Activated B cell treated with CpG ODN at 0.5 μM for 24 hours (primary cell): ENCODE measurements at regions of chr9 and their contacts with region 1.

Region 1: DNA sequence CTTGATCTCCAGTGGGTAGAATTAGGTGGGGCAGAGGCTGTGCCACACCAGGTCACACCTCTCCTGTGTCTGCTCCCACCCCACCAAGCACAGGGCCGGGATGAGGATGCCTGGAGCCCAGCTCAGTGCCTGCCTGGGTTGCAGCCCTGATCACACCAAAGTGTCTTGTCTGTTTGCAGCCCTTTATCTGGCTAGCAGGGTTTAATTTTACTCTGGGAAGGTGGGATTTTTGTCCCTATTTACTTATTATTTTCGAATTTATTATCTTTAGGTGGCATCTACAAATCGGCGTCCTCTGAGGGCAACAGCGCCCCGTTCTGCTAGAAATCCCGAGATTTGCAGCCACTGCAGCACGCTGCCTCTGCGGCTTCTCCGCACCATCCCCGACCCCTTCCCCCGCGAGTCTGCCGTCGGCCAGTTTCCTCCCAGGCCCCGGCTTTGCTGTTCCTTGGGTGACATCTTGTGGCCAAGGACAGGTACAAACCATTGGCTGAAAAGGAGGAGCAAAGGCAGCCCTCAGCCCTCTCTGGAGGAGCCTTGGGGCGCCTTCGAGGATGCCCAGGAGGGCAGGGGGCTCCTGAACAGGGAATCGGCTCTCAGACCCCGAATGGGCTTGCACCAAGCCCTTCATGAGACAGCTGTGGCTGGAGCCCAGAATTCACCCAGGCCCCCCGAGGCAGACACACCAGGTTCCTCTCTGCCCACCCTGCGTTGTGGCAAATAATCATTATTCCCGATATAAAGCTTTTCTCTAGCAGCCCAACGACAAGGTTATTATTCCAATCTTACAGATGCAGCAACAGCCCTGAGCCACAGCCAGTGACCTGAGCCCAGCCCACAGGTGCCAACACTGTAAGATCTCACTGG is 113.0 kb downstream of the GAPVD1 start:
- DNase-seq: peak; percentile 43
- ATAC-seq: peak; percentile 95
- H3K4me3 Mint-ChIP-seq: peak overlapping the region; percentile 32
- H3K27ac Mint-ChIP-seq: no peak overlapping the region
- H3K4me1 Mint-ChIP-seq: peaks cover 4% of the 10 kb centered on the region
- H3K27me3 Mint-ChIP-seq: peaks cover 4% of the 10 kb centered on the region
- CTCF ChIP-seq: no peak

Region 2: DNA sequence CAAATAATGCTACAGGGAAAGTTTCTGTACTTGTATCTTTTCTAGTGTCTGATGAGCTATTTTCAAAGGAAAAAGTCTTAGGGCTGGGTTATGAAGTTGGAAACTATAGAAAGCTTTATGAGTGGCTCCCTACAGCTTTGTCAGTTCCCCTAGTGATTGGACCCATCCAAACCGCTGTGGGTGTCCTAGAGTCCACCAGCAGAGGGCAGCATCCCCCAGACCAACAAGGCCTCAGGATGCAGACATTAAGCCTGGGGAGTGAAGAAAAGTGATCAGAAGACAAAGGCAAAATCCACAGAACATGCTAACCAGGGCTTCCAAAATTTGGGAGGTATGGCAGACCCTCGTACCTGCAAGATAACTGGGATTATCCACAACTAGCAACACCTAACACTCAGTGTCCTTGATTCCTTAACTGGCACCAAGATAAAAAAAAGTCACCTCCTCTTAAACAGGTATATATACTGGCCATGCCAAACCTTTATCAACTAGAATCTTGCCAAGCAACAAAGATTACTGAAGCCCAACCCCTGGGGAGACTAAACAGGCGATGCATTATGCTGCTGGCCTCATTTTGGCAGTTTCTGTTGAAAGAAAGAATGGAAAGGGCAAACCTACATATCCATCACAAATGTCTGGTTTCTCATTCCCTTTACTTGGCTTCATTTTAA is 757.1 kb before region 1 on chr9:
- CTCF ChIA-PET with region 1: interaction called, 3 read pairs
- POLR2A ChIA-PET with region 1: no interaction called
- intact Hi-C with region 1: loop called (anchors 1 kb)
- DNase-seq: peak; percentile 47
- ATAC-seq: peak; percentile 75
- H3K4me3 Mint-ChIP-seq: no peak overlapping the region
- H3K27ac Mint-ChIP-seq: no peak overlapping the region
- H3K4me1 Mint-ChIP-seq: peaks cover 2% of the 10 kb centered on the region
- H3K27me3 Mint-ChIP-seq: no peaks in the 10 kb centered on the region
- CTCF ChIP-seq: peak; percentile 41

Region 3: DNA sequence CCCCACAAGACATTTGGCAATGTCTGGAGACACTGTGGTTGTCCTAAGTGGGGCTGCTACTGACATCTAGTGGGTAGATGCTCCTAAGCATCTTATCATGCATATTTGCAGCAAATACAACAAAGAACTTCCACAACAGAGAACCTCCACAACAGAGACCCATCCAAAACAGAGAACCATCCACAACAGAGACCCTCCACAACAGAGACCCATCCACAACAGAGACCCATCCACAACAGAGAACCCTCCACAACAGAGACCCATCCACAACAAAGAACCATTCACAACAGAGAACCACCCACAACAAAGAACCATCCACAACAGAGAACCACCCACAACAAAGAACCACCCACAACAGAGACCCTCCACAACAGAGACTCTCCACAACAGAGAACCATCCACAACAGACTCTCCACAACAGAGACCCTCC is 479.9 kb before region 1 on chr9:
- CTCF ChIA-PET with region 1: no interaction called
- POLR2A ChIA-PET with region 1: no interaction called
- intact Hi-C with region 1: loop called (anchors 10 kb)
- DNase-seq: no peak
- ATAC-seq: peak; percentile 85
- H3K4me3 Mint-ChIP-seq: no peak overlapping the region
- H3K27ac Mint-ChIP-seq: peak overlapping the region; percentile 50
- H3K4me1 Mint-ChIP-seq: no peaks in the 10 kb centered on the region
- H3K27me3 Mint-ChIP-seq: no peaks in the 10 kb centered on the region
- CTCF ChIP-seq: no peak

Region 4: GRCh38 chr9:125255781-125256391 is 118.8 kb before region 1 on chr9:
- CTCF ChIA-PET with region 1: no interaction called
- POLR2A ChIA-PET with region 1: no interaction called
- intact Hi-C with region 1: loop called (anchors 1 kb)
- DNase-seq: no peak
- ATAC-seq: no peak
- H3K4me3 Mint-ChIP-seq: no peak overlapping the region
- H3K27ac Mint-ChIP-seq: no peak overlapping the region
- H3K4me1 Mint-ChIP-seq: peaks cover 9% of the 10 kb centered on the region
- H3K27me3 Mint-ChIP-seq: peaks cover 2% of the 10 kb centered on the region
- CTCF ChIP-seq: no peak

Region 5: GRCh38 chr9:125694478-125694877 is 319.8 kb after region 1 on chr9:
- CTCF ChIA-PET with region 1: no interaction called
- POLR2A ChIA-PET with region 1: no interaction called
- intact Hi-C with region 1: no loop called
- DNase-seq: no peak
- ATAC-seq: no peak
- H3K4me3 Mint-ChIP-seq: no peak overlapping the region
- H3K27ac Mint-ChIP-seq: no peak overlapping the region
- H3K4me1 Mint-ChIP-seq: peaks cover 49% of the 10 kb centered on the region
- H3K27me3 Mint-ChIP-seq: no peaks in the 10 kb centered on the region
- CTCF ChIP-seq: no peak